Activated CD4-positive, alpha-beta T cell treated with anti-CD3 and anti-CD28 coated beads, Interleukin-2, amount 10 ng/mL, durations not matched to agents 7 days and 5 days (primary cell): ENCODE measurements at regions of chr19 and their contacts with region 1.

Region 1: DNA sequence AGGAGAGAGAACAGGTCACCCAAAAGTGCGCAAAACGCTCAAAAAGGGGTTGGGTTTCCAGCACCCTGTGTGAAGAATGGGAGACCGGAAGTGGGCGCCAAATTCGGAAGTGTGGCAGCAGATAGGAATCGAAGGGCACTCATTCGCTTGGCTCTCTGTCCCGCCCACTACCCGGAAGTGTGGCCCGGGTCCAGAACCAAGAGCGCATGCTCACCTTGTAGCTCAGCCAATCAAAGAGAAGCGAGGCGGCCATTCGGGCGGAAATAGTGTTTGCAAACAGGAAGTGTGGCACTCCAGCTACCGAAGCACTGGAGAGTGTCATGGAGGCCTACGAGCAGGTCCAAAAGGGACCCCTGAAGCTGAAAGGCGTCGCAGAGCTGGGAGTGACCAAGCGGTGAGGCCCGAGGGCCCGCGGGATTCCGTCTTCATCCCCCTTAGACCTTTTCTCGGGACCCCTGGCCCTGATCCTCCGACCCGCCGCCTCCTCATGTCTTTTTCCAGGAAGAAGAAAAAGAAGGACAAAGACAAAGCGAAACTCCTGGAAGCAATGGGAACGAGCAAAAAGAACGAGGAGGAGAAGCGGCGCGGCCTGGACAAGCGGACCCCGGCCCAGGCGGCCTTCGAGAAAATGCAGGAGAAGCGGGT is at the start of gene FAM32A:
- DNase-seq: peak; percentile 100
- H3K4me3 Mint-ChIP-seq: peak within 1 kb of the TSS; percentile 95
- H3K27ac Mint-ChIP-seq: peak within 1 kb of the TSS; percentile 97
- H3K4me1 Mint-ChIP-seq: peaks cover 34% of the 10 kb centered on the region
- H3K27me3 Mint-ChIP-seq: peaks cover 3% of the 10 kb centered on the region
- total RNA-seq, gene FAM32A: 64.1 to 76.8 TPM

Region 2: DNA sequence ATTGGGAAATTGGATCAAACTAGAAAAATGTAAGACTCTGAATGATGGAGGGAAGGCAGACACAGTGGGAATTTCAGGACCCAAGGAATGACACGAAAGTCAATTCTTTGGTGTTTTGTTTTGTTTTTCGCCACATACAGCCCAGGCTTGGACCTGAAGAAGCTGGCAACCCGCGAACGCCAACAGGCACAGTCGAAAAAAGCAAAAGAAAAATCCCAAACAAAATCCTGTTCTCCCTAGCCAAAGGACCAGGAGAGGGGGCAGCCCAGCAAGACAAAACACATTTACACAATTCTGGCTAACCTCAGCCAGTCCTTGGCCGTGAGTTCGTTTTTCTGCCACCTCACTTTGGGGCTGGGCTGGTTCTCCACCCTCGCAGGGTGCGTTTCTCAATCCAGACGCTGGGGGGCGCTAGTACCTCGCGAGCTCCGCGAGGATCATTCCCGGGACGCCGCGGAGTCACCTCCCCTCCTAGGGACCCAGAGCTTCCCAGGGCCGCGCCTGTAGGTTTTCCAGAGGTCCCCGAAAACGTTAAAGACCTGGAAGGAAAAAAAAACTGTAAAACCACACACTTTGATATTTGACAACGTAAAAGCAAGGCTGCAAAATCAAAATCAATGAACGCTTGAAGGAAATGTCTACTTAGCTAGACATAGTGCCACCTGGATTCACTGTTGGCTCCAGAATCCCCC is 143.8 kb before region 1 on chr19:
- CTCF ChIA-PET with region 1: interaction called, 22 read pairs
- POLR2A ChIA-PET with region 1: interaction called, 4 read pairs
- DNase-seq: peak; percentile 75
- H3K4me3 Mint-ChIP-seq: peak overlapping the region; percentile 28
- H3K27ac Mint-ChIP-seq: peak overlapping the region; percentile 15
- H3K4me1 Mint-ChIP-seq: peaks cover 20% of the 10 kb centered on the region
- H3K27me3 Mint-ChIP-seq: peaks cover 7% of the 10 kb centered on the region

Region 3: DNA sequence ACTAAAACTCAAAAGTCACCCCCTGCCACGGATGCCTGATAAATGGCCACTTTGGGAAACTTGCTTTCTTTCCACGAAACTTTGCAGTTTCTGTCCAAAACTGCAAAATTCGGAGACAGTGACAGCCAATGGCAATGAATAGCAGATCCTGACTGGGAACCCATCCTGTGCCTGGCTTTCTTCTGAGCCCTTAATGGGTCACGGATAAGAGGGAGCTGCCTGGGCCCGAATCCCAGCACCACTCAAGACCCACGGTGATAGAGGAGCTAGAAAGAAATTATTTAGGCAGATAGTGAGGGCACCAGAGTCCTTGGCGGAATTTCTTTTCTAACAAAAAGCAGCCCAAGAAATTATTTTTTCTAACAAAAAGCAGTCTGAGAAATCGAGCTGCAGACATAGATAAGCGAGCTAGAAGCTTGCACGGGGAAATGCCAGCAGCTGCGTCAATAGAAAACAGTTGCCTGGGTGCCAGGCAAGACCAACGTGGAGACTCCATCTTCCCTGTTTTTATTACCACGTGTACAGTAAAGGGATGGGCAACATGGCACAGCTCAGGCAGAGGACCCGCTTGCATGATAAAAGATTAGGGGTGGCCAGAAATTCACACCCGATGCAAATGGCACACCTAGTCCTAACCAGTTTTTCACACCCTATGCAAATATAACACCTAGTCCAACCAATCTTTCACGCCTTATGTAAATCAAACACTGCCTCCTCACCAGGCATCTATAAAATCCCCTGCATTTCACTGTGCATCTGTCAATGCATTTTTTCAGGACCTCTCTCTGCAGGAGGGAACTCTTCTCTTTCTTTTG is 48.9 kb before region 1 on chr19:
- CTCF ChIA-PET with region 1: no interaction called
- POLR2A ChIA-PET with region 1: no interaction called
- DNase-seq: no peak
- H3K4me3 Mint-ChIP-seq: no peak overlapping the region
- H3K27ac Mint-ChIP-seq: no peak overlapping the region
- H3K4me1 Mint-ChIP-seq: peaks cover 23% of the 10 kb centered on the region
- H3K27me3 Mint-ChIP-seq: no peaks in the 10 kb centered on the region

Region 4: GRCh38 chr19:16197622-16198369 is 12.6 kb after region 1 on chr19 and contains the start of gene AP1M1:
- CTCF ChIA-PET with region 1: interaction called, 13 read pairs
- POLR2A ChIA-PET with region 1: interaction called, 6 read pairs
- DNase-seq: peak; percentile 99
- H3K4me3 Mint-ChIP-seq: peak within 1 kb of the TSS; percentile 93
- H3K27ac Mint-ChIP-seq: peak within 1 kb of the TSS; percentile 92
- H3K4me1 Mint-ChIP-seq: peaks cover 46% of the 10 kb centered on the region
- H3K27me3 Mint-ChIP-seq: no peaks in the 10 kb centered on the region
- total RNA-seq, gene AP1M1: 129 to 150 TPM